ENCODE measurements at regions of chr17 and their contacts with region 1.

Region 1: DNA sequence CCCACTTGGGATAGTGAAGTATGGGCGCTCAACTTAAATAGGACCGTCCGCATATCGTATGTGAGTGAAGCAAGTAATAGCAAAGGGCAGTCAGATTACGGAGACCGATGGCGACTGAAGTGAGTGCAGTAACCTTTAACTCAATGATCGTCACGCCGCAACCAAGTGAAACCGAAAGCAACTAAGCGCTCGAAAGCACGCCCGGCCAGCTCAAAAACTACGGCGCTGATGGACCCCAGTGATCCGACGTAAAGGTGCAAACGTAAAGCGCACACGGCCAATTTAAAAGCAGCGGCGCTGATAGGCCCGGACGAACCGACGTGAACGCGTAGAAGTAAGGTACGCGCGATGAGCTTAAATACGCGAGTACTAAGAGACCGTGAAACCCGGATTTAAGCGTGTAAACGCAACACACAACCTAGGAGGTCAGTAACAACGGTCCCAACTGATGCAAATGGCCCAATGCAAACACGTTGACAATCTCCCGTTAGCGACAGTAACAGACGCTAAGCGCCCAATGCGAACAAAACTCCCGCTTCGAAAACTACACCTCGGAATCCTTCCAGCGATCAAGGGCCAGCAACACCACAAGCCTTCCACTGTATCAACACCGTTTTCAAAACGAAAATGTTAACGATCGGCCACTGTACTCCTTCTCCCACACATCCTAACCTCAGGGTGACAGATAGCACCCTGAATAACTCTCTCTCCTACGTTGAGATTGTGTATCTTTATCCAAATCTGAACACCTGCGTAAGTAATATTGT is 37.9 kb upstream of the ARL4D start:
- DNase-seq: peak; percentile 100
- ATAC-seq: peak; percentile 85
- H3K4me3 ChIP-seq: peak overlapping the region; percentile 42
- H3K27ac ChIP-seq: peak overlapping the region; percentile 51
- H3K4me1 ChIP-seq: peaks cover 15% of the 10 kb centered on the region
- H3K27me3 ChIP-seq: no peaks in the 10 kb centered on the region
- CTCF ChIP-seq: no peak
- POLR2A ChIP-seq: peak; percentile 100
- RAD21 ChIP-seq: peak; percentile 33

Region 2: DNA sequence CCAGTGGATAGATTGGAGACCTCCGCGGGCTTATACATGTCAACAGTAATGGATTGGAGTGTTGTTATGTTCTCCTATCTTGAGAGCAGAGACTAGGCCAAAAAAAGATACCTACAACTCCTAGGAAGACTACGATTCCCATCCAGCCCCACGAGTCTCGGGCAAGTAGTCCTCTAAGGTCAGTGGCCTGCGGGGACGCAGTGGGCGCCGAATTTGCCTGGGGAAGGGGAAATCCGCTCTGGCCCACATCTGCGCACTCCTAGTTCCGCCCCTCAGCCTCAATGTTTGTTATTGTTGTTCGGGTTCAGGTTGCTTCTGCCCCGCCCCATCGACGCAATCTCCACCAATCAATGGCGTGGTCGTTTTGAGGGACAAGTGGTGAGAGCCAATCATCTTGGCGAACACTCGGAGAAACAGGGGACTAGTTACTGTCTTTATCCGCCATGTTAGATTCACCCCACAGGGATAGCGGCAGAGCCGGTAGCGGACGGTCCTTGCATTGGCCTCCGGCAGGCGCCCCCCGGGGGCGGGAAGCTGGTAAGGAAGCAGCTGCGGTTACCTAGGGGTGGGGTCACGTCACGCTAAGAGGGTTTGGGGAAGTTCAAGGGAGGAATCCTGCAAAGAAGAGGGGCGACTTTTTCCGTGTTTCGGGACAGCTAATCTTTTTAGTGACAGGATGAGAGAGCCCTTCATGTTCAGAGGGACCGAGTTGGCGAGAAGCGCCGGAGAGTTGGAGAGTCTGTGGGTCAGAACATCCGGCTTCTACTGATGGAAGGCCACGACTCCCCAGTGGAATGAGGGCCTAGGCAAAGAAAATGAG is 189.9 kb before region 1 on chr17 and contains the start of gene NBR1:
- CTCF ChIA-PET with region 1: no interaction called
- POLR2A ChIA-PET with region 1: interaction called, 12 read pairs
- dilution Hi-C with region 1: no loop called
- in situ Hi-C with region 1: no loop called
- intact Hi-C with region 1: no loop called
- DNase-seq: peak; percentile 98
- ATAC-seq: peak; percentile 83
- H3K4me3 ChIP-seq: peak within 1 kb of the TSS; percentile 75
- H3K27ac ChIP-seq: peak within 1 kb of the TSS; percentile 98
- H3K4me1 ChIP-seq: peaks cover 2% of the 10 kb centered on the region; the same call in 1 of the 2 replicates
- H3K27me3 ChIP-seq: no peaks in the 10 kb centered on the region
- CTCF ChIP-seq: 0 out of 2 replicates have a peak, but pooled peaks have one; percentile 24
- POLR2A ChIP-seq: peak; percentile 91
- RAD21 ChIP-seq: no peak
- total RNA-seq, gene NBR1: 105 and 132 TPM in 2 replicates

Region 3: DNA sequence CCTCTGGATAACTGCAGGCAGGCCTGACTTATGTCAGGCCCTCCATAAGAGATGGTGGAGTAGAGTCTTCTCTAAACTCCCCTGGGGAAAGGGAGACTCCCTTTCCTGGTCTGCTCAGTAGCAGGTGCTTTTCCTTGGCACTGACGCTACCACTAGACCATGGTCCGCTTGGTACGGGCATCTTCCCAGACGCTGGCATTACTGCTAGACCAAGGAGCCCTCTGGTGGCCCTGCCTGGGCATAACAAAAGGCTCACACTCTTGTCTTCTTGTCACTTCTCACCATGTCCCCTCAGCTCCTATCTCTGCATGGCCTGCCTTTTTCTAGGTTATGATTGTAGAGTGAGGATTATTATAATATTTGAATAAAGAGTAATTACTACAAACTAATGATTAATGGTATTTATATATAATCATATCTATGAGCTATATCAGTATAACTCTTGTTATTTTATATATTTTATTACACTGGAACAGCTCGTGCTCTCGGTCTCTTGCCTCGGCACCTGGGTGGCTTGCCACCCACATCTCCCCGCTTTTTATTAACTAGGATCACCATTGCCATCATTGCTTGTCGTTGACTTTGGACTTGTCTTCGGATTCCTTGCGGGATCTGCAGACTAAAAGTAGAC is 21.9 kb before region 1 on chr17:
- CTCF ChIA-PET with region 1: interaction called, 7 read pairs
- POLR2A ChIA-PET with region 1: interaction called, 14 read pairs
- dilution Hi-C with region 1: no loop called
- in situ Hi-C with region 1: no loop called
- intact Hi-C with region 1: no loop called
- DNase-seq: no peak
- ATAC-seq: no peak
- H3K4me3 ChIP-seq: no peak overlapping the region
- H3K27ac ChIP-seq: no peak overlapping the region
- H3K4me1 ChIP-seq: peaks cover 9% of the 10 kb centered on the region
- H3K27me3 ChIP-seq: no peaks in the 10 kb centered on the region
- CTCF ChIP-seq: peak; percentile 63
- POLR2A ChIP-seq: no peak
- RAD21 ChIP-seq: peak; percentile 71

Region 4: GRCh38 chr17:43393944-43394482 is 33.1 kb after region 1 on chr17:
- CTCF ChIA-PET with region 1: interaction called, 6 read pairs
- POLR2A ChIA-PET with region 1: interaction called, 18 read pairs
- dilution Hi-C with region 1: no loop called
- in situ Hi-C with region 1: no loop called
- intact Hi-C with region 1: no loop called
- DNase-seq: peak; percentile 83
- ATAC-seq: peak; percentile 47
- H3K4me3 ChIP-seq: no peak overlapping the region
- H3K27ac ChIP-seq: peak overlapping the region; percentile 52
- H3K4me1 ChIP-seq: peaks cover 5% of the 10 kb centered on the region
- H3K27me3 ChIP-seq: no peaks in the 10 kb centered on the region
- CTCF ChIP-seq: peak; percentile 97
- POLR2A ChIP-seq: 0 out of 2 replicates have a peak, but pooled peaks have one; percentile 47
- RAD21 ChIP-seq: peak; percentile 99

Region 5: GRCh38 chr17:43483674-43484372 is 122.9 kb after region 1 on chr17 and contains the start of gene DHX8:
- CTCF ChIA-PET with region 1: interaction called, 13 read pairs
- POLR2A ChIA-PET with region 1: interaction called, 44 read pairs
- dilution Hi-C with region 1: no loop called
- in situ Hi-C with region 1: no loop called
- intact Hi-C with region 1: no loop called
- DNase-seq: peak; percentile 99
- ATAC-seq: peak; percentile 98
- H3K4me3 ChIP-seq: peak within 1 kb of the TSS; percentile 78
- H3K27ac ChIP-seq: peak within 1 kb of the TSS; percentile 86
- H3K4me1 ChIP-seq: peaks cover 8% of the 10 kb centered on the region
- H3K27me3 ChIP-seq: no peaks in the 10 kb centered on the region
- CTCF ChIP-seq: peak; percentile 100; the same call in 1 of the 2 replicates
- POLR2A ChIP-seq: peak; percentile 80
- RAD21 ChIP-seq: peak; percentile 100
- total RNA-seq, gene DHX8: 50.0 TPM in 2 replicates